ENCODE measurements at regions of chr5 and their contacts with region 1.

Region 1: DNA sequence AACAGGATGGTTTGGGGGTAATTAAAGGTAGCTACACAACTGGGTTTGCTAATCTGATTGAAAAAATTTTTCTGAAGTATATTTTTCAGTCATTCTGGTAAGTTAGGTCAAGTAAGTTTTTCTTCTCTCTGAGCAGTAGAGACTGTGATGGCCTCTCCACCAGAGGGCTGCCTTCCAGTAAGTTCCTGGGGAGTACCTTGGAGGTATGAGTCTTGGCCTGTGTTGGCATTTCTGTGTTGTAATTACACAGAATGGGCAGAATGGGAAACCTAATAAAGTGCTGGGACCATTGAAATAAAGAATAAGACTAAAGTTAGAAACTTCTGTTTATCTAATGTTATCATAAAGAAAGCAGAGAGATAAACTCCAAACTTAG is 430.8 kb downstream of the ARHGEF28 start:
- DNase-seq: peak in 2 of 14 experiments; percentile 3 to 8
- ATAC-seq: no peak
- H3K4me3 ChIP-seq: no peak overlapping the region
- H3K4me3 Mint-ChIP-seq: no peak overlapping the region
- H3K27ac ChIP-seq: no peak overlapping the region
- H3K27ac Mint-ChIP-seq: no peak overlapping the region
- H3K4me1 ChIP-seq: no peaks in the 10 kb centered on the region
- H3K4me1 Mint-ChIP-seq: no peaks in the 10 kb centered on the region
- H3K27me3 ChIP-seq: peaks cover 4 to 20% of the 10 kb centered on the region in 2 experiments
- H3K27me3 Mint-ChIP-seq: peaks cover 19% of the 10 kb centered on the region
- CTCF ChIP-seq: no peak

Region 2: GRCh38 chr5:74107899-74108298 is 51.1 kb after region 1 on chr5:
- CTCF ChIA-PET with region 1: no interaction called
- POLR2A ChIA-PET with region 1: no interaction called
- intact Hi-C with region 1: no loop called
- DNase-seq: no peak
- ATAC-seq: no peak
- H3K4me3 ChIP-seq: no peak overlapping the region
- H3K4me3 Mint-ChIP-seq: no peak overlapping the region
- H3K27ac ChIP-seq: no peak overlapping the region
- H3K27ac Mint-ChIP-seq: no peak overlapping the region
- H3K4me1 ChIP-seq: no peaks in the 10 kb centered on the region
- H3K4me1 Mint-ChIP-seq: no peaks in the 10 kb centered on the region
- H3K27me3 ChIP-seq: peaks cover 0 to 7% of the 10 kb centered on the region in 2 experiments
- H3K27me3 Mint-ChIP-seq: peaks cover 29% of the 10 kb centered on the region
- CTCF ChIP-seq: no peak

Region 3: GRCh38 chr5:74648835-74649293 is 592.1 kb after region 1 on chr5:
- CTCF ChIA-PET with region 1: no interaction called
- POLR2A ChIA-PET with region 1: no interaction called
- intact Hi-C with region 1: loop called (anchors 2 to 5 kb)
- DNase-seq: peak in 6 of 14 experiments; percentile 11 to 76 (median 49)
- ATAC-seq: peak; percentile 83
- H3K4me3 ChIP-seq: no peak overlapping the region
- H3K4me3 Mint-ChIP-seq: no peak overlapping the region
- H3K27ac ChIP-seq: no peak overlapping the region
- H3K27ac Mint-ChIP-seq: no peak overlapping the region
- H3K4me1 ChIP-seq: peaks cover 4% of the 10 kb centered on the region
- H3K4me1 Mint-ChIP-seq: no peaks in the 10 kb centered on the region
- H3K27me3 ChIP-seq: peaks cover 0 to 3% of the 10 kb centered on the region in 2 experiments
- H3K27me3 Mint-ChIP-seq: peaks cover 9% of the 10 kb centered on the region
- CTCF ChIP-seq: peak; percentile 91

Measured in CD4-positive, alpha-beta T cell (primary cell).